HepG2 (cell line): ENCODE measurements at regions of chr16 and their contacts with region 1.

Region 1: DNA sequence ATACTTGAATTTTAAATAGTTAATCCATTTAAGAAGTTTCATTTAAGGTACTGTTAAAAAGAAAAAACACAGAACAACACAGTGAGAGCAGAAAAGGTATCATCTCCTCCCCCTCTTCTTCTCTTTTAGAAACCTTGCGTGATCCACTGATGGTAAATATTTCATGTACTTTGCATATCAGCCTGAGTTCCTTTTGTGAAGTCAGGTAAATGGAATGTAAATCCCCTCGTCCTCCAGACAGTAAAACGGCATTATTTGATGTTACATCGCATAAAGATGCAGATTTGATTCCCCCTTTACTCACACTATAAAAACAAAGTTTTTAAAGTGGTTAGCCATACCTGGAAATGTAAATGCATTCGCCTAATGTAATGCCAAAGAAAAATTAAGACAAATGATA is 234.4 kb downstream of the WWOX start:
- DNase-seq: no peak
- ATAC-seq: no peak
- H3K4me3 ChIP-seq: no peak overlapping the region
- H3K27ac ChIP-seq: no peak overlapping the region
- H3K4me1 ChIP-seq: peaks cover 14% of the 10 kb centered on the region
- H3K27me3 ChIP-seq: no peaks in the 10 kb centered on the region
- CTCF ChIP-seq: no peak
- EP300 ChIP-seq: no peak
- POLR2A ChIP-seq: no peak
- RAD21 ChIP-seq: no peak

Region 2: DNA sequence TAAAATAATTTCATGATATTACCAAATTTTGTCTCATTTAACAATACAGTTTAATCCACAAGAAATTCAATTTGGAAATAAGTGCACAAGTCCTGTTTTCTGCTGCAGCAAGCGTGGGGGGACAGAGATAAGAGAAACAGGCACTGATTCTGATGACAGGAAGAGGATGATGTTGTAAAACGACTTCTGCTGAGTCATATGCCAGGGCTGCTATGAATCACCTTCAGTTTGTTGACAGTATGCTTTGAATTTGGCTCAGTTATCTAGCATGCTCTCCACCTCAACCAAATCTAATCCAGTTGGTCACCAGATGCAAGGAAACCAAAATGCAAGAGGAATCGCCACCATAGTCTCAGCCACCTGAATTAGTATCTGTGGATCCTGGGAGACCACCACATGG is 1386.9 kb before region 1 on chr16:
- CTCF ChIA-PET with region 1: no interaction called
- POLR2A ChIA-PET with region 1: no interaction called
- in situ Hi-C with region 1: no loop called
- intact Hi-C with region 1: no loop called
- DNase-seq: peak; percentile 20
- ATAC-seq: no peak
- H3K4me3 ChIP-seq: no peak overlapping the region
- H3K27ac ChIP-seq: no peak overlapping the region
- H3K4me1 ChIP-seq: no peaks in the 10 kb centered on the region
- H3K27me3 ChIP-seq: no peaks in the 10 kb centered on the region; a peak in 1 of 5 replicates
- CTCF ChIP-seq: no peak
- EP300 ChIP-seq: no peak
- POLR2A ChIP-seq: no peak
- RAD21 ChIP-seq: no peak

Region 3: DNA sequence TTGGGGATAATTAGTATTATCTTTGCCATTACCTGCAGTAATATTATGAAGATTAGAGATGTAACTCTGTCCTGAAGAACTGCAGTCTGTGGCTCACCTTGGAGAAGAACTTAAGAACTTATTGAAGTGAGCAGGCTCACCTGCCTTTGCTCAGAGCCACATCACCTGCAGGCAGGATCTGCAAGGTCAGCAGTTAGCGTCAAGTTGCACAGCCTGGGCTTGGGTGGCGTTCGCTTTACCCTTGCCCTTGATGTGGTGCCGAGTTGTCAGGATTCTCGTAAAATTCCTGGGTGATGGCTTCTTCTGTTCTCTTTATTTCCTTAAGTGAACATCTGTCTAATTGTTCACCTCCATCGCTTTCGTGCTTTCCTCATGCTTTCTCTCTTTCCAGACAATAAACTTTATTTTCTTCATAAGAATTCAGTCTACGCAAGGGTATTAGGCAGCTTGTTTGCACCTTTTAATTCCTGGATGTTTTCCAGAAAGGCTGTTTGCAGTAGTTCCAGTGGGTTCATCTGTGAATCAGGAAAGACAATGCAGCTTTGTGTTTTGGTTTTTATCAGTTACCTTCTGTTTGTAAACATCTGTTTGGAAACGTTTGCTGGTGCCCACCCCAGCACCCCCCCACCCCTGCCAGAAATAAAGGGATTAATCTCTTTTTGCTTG is 19.9 kb after region 1 on chr16:
- CTCF ChIA-PET with region 1: no interaction called
- POLR2A ChIA-PET with region 1: no interaction called
- in situ Hi-C with region 1: no loop called
- intact Hi-C with region 1: loop called (anchors 1 kb)
- DNase-seq: no peak
- ATAC-seq: no peak
- H3K4me3 ChIP-seq: no peak overlapping the region
- H3K27ac ChIP-seq: no peak overlapping the region
- H3K4me1 ChIP-seq: no peaks in the 10 kb centered on the region
- H3K27me3 ChIP-seq: no peaks in the 10 kb centered on the region
- CTCF ChIP-seq: no peak
- EP300 ChIP-seq: no peak
- POLR2A ChIP-seq: no peak
- RAD21 ChIP-seq: no peak